ENCODE measurements at regions of chr7 and their contacts with region 1.

Region 1: GRCh38 chr7:121985476-121986030 is 112.6 kb downstream of the PTPRZ1 start:
- DNase-seq: no peak
- H3K4me3 ChIP-seq: no peak overlapping the region
- H3K27ac ChIP-seq: no peak overlapping the region
- H3K4me1 ChIP-seq: no peaks in the 10 kb centered on the region
- H3K27me3 ChIP-seq: no peaks in the 10 kb centered on the region
- CTCF ChIP-seq: no peak

Region 2: GRCh38 chr7:121547544-121548092 is 437.9 kb before region 1 on chr7:
- CTCF ChIA-PET with region 1: no interaction called
- POLR2A ChIA-PET with region 1: no interaction called
- intact Hi-C with region 1: no loop called
- DNase-seq: peak in 1 of 2 experiments; percentile 62
- H3K4me3 ChIP-seq: no peak overlapping the region
- H3K27ac ChIP-seq: no peak overlapping the region
- H3K4me1 ChIP-seq: peaks cover 32% of the 10 kb centered on the region
- H3K27me3 ChIP-seq: no peaks in the 10 kb centered on the region
- CTCF ChIP-seq: peak; percentile 88

Region 3: GRCh38 chr7:121824276-121824675 is 161.3 kb before region 1 on chr7:
- CTCF ChIA-PET with region 1: no interaction called
- POLR2A ChIA-PET with region 1: no interaction called
- intact Hi-C with region 1: loop called (anchors 2 kb)
- DNase-seq: no peak
- H3K4me3 ChIP-seq: no peak overlapping the region
- H3K27ac ChIP-seq: no peak overlapping the region
- H3K4me1 ChIP-seq: no peaks in the 10 kb centered on the region
- H3K27me3 ChIP-seq: no peaks in the 10 kb centered on the region
- CTCF ChIP-seq: no peak